Breast epithelium (tissue), 4 donors: ENCODE measurements at regions of chr9 and their contacts with region 1.

Region 1: DNA sequence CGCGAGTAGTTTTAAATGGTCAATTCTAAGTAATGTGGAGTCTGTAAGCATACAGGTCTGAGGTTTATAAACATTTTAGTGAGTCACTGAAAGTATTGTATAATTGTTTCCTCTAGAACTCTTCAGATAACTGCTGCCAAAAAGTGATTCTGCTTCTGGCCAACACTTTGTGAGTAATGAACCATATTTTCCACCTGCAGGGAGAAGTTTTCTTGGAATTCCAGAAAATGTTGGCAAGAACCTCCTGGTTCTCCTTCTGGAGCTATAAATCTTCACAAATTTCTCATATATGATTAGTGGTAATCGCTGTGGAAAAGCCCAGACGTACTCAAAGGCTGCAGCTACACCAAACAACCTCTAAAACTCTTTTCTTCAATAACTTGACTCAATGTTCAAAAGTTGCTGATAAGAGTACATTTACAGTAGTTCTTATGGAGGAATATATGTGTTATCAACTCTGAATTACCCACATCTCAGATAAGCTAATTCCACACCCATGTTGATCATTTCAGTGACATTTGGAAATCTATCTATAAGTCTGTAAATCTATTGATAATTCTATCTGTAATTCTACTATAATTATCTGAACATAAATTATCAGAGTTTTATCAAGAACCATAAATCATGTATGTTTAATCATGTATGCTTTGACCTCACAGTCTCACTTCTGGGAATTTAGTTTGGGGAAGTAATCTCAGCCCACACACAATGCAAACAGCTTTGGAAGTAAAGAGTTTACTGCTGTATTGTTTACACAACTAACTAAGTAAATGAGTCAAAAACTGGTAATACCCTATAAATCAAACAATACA is 74.1 kb downstream of the FNBP1 start:
- DNase-seq: no peak
- H3K4me3 ChIP-seq: no peak overlapping the region
- H3K27ac ChIP-seq: peak overlapping the region; percentile 62 to 66
- H3K4me1 ChIP-seq: no peaks in the 10 kb centered on the region
- H3K27me3 ChIP-seq: no peaks in the 10 kb centered on the region
- CTCF ChIP-seq: no peak
- POLR2A ChIP-seq: no peak

Region 2: DNA sequence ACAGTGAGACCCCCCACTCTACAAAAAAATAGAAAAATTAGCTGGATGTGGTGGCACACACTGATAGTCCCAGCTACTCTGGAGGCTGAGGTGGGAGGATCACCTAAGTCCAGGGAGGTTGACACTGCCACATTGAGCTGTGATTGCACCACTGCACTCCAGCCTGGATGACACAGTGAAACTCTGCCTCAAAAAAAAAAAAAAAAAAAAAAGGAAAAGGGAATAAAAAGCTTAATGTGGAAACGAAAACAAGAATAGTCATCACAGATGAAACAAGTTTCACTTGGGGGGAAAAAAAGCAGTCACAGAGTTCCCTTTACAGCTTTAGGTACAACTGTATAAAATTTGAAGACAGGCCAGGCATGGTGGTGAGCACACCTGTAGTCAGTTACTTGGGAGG is 10.1 kb before region 1 on chr9:
- intact Hi-C with region 1: loop called (anchors 1 kb)
- DNase-seq: no peak
- H3K4me3 ChIP-seq: no peak overlapping the region
- H3K27ac ChIP-seq: no peak overlapping the region
- H3K4me1 ChIP-seq: peaks cover 0 to 8% of the 10 kb centered on the region in 2 donors
- H3K27me3 ChIP-seq: no peaks in the 10 kb centered on the region
- CTCF ChIP-seq: no peak
- POLR2A ChIP-seq: no peak